ENCODE measurements at regions of chr14 and their contacts with region 1.

Region 1: GRCh38 chr14:73058224-73058921 is at the start of gene RBM25:
- DNase-seq: peak; percentile 95 to 98 (median 96)
- ATAC-seq: peak; percentile 98 to 100 (median 99)
- H3K4me3 ChIP-seq: peak within 1 kb of the TSS; percentile 56 to 95 (median 87)
- H3K27ac ChIP-seq: peak within 1 kb of the TSS; percentile 77 to 97 (median 92)
- H3K4me1 ChIP-seq: peaks cover 6 to 46% (median 32%) of the 10 kb centered on the region in 12 donors
- H3K27me3 ChIP-seq: no peaks in the 10 kb centered on the region
- CTCF ChIP-seq: peak in 4 of 12 donors; percentile 9 to 38 (median 18)
- POLR2A ChIP-seq: peak; percentile 45 to 83
- total RNA-seq, gene RBM25: 13.1 to 49.2 (median 38.8) TPM

Region 2: DNA sequence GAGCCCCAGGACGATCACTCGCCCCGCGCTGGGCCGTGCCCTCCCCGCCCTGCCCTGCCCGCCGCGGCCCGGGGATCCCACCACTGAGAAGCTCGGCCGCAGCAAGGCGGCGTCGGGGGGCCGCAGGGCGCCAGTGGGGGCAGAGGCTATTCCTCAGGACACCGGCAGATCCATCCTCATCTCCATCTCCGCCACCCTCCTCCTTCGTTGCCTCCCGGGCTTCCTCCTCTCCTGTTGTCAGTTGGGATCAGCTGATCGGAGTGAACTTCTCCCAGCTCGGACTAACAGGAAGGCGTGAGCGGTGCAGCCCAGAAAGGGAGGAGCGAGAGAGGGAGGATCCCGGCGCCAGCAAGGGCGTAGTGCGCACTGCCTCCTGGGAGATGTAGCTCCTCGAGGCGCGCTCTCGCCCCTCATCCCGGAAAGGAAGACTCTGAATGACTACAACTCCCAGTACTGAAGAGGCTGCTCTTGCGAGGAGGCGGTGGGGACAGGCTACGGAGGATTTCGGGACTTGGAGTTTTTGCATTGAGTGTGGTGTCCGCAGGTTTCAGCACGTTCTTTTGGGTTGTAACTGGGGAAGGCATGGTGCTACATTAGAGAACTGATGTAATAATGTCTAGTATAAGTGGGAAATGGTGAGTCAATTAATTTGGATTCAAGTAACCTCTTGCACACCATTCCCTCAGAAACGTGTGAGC is 31.4 kb before region 1 on chr14 and contains the start of gene ZFYVE1:
- intact Hi-C with region 1: loop called in 3 of 10 experiments (anchors 1 to 2 kb)
- DNase-seq: peak; percentile 97 to 98 (median 98)
- ATAC-seq: peak; percentile 100
- H3K4me3 ChIP-seq: peak within 1 kb of the TSS; percentile 51 to 98 (median 76)
- H3K27ac ChIP-seq: peak within 1 kb of the TSS; percentile 10 to 95 (median 83)
- H3K4me1 ChIP-seq: peaks cover 0 to 39% (median 21%) of the 10 kb centered on the region in 12 donors
- H3K27me3 ChIP-seq: no peaks in the 10 kb centered on the region
- CTCF ChIP-seq: no peak
- POLR2A ChIP-seq: peak in 1 of 2 donors; percentile 84
- total RNA-seq, gene ZFYVE1: 10.6 to 20.7 (median 14.8) TPM